Sigmoid colon (tissue), 7 donors: ENCODE measurements at regions of chr12 and their contacts with region 1.

Region 1: DNA sequence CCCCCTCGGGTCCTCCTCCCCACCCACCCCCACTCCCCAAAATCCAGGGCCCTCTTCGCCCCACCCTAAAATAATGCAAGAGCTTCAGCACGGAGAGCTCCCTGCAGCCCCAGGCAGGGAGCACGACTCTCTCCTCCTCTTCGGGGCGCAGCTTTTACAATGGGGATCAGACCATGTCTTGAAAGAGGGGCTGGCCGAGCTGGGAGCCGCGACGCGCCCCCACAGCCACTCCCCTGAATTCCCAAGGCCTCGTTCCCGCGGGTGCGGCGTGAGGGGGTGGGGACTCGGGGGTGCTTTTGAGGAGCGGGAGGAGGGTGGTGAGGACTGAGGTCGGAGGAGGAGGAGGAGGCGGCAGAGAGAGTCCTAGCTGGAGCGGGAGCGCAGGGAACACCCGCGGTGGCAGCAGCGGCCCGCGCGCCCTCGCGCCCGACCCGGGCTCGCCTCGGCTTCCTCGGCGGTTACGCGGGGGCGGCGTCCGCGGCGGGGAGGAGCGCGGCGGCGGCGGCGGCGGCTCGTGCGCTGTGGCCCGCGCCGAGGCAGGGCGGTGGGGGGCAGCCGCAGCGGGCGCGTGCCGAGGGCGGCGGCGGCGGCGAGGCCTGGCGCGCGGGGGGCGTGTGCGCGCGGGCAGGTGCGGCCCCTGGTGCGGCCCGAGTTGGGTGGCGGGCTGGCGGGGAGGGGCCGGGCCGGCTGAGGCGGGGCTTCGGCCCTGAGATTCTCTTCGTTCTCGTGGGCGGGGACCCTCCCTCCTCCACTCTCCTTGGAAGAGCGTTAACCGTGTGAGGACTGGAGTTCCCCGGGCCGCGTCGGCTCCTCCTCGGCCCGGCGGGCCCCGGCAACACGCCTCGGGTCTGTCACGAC is at the start of gene ANKS1B:
- DNase-seq: peak; percentile 74
- H3K4me3 ChIP-seq: peak within 1 kb of the TSS; percentile 71 to 82 (median 80)
- H3K27ac ChIP-seq: peak within 1 kb of the TSS; percentile 80 to 88 (median 84)
- H3K4me1 ChIP-seq: peaks cover 0 to 23% (median 19%) of the 10 kb centered on the region in 4 donors
- H3K27me3 ChIP-seq: no peaks in the 10 kb centered on the region
- CTCF ChIP-seq: no peak
- EP300 ChIP-seq: no peak
- POLR2A ChIP-seq: no peak
- total RNA-seq, gene ANKS1B: 27.7 to 57.3 (median 37.1) TPM

Region 2: DNA sequence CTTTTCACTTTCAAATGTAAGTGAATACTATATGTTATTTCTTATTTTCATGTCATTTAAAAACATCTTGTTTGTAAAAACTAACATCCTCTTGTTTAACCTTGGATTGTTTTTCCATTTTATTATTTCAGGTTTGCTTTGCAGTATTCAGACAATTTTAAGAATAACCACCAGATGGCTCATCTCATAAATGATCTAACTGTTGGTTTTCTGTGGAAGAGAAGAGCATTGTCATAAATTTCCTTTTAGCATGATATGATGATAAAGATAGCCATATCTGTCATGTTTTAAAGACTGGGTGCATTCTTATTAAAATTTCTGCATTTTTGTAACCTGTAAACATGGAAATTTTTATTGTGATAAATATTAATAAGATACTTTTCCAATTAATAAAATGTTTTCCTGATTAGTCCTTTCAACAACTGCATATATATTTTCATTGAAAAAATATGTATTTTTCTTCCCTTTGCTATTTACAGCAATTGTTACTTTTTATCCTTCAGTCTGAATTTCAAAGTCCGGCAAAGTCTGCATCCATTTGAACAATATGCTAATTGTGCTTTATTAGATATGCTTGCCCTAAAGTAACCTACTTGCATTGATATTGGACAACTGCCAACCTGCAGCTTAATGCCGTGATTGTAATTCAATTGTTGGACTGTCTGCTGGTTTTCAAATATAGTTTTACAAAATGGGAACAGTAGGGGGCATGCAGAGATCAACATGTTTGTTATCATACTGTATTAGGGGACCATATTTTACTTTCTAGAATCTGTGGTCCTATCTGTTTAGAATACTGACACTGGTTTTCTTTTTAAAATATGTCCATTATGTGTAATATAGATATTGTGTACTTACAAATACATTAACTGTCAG is 173.5 kb before region 1 on chr12:
- intact Hi-C with region 1: loop called (anchors 1 kb)
- DNase-seq: no peak
- H3K4me3 ChIP-seq: no peak overlapping the region
- H3K27ac ChIP-seq: no peak overlapping the region
- H3K4me1 ChIP-seq: peaks cover 0 to 7% (median 4%) of the 10 kb centered on the region in 4 donors
- H3K27me3 ChIP-seq: no peaks in the 10 kb centered on the region
- CTCF ChIP-seq: peak; percentile 18 to 52 (median 44)
- EP300 ChIP-seq: no peak
- POLR2A ChIP-seq: no peak

Region 3: DNA sequence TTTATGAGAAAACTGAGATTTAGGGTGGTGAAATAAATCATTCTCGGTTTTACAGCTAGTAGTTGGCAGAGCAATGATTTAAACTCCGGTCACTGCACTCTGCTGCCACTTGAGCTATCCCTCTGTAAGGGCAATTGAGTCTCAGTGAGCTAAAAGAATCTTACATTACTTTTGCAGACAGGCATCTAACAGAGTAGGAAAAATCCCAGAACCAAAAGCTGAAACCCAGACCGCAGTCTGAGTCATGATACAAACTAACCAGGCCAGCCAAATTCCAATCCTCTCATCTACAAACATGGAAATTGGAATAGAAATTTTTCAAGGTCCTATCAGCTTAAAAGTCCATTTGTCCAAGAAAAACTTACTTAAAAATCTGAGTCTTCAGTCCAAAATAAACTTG is 73.4 kb before region 1 on chr12:
- intact Hi-C with region 1: loop called (anchors 2 kb)
- DNase-seq: peak; percentile 70
- H3K4me3 ChIP-seq: peak overlapping the region in 3 of 4 donors; percentile 23 to 31 (median 29)
- H3K27ac ChIP-seq: peak overlapping the region; percentile 78 to 86 (median 82)
- H3K4me1 ChIP-seq: peaks cover 2 to 43% (median 28%) of the 10 kb centered on the region in 4 donors
- H3K27me3 ChIP-seq: no peaks in the 10 kb centered on the region
- CTCF ChIP-seq: no peak
- EP300 ChIP-seq: peak in 1 of 4 donors; percentile 13
- POLR2A ChIP-seq: no peak

Region 4: GRCh38 chr12:100142851-100143559 is 158.5 kb after region 1 on chr12 and contains the start of gene BLTP3B:
- intact Hi-C with region 1: no loop called
- DNase-seq: peak; percentile 93
- H3K4me3 ChIP-seq: peak within 1 kb of the TSS; percentile 76 to 99 (median 94)
- H3K27ac ChIP-seq: peak within 1 kb of the TSS; percentile 94 to 100 (median 100)
- H3K4me1 ChIP-seq: peaks cover 0 to 26% (median 24%) of the 10 kb centered on the region in 4 donors
- H3K27me3 ChIP-seq: no peaks in the 10 kb centered on the region
- CTCF ChIP-seq: no peak
- EP300 ChIP-seq: no peak
- POLR2A ChIP-seq: no peak
- total RNA-seq, gene BLTP3B: 33.3 to 41.7 (median 36.4) TPM